ENCODE measurements at regions of chr20 and their contacts with region 1.

Region 1: DNA sequence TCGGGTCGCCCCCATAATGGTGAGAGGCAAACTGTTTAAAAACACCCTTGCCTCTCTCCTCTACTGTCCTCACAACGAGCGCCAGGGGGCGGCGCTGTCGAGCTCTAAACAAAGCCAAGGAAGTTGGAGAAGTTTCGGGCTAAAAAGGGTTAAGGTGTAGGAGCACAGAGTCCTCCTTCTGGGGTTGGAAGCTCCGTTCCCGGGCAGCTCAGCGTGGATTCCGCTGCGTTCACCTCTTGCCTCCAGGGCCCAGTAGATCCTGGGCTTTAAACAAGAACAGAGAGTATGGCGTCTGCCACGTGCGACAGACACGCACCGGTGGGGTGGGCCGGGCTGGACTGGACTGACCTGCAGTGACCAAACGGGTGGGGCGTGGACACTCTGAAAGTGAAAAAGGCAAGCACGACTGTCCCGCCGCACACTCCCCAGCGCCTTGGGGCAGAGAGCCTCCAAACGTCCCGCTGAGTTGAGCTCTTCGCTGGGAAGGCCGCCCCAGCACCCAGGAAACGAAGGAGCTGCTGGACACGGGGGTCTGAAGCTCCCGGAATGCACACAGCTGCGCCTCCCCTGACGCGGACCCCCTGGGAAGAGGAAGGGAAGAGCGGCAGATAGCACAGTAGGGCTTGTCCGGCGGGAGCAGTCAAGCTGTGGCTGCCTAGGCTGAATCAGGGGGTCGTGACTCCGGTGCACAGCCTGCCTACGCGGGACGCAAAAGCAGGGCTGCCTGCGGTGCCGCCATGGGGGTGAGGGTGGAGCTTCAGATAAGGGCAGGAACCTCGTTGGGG is 1.6 kb upstream of the THBD start:
- DNase-seq: no peak
- H3K4me3 ChIP-seq: peak overlapping the region; percentile 60
- CTCF ChIP-seq: peak; percentile 78

Region 2: DNA sequence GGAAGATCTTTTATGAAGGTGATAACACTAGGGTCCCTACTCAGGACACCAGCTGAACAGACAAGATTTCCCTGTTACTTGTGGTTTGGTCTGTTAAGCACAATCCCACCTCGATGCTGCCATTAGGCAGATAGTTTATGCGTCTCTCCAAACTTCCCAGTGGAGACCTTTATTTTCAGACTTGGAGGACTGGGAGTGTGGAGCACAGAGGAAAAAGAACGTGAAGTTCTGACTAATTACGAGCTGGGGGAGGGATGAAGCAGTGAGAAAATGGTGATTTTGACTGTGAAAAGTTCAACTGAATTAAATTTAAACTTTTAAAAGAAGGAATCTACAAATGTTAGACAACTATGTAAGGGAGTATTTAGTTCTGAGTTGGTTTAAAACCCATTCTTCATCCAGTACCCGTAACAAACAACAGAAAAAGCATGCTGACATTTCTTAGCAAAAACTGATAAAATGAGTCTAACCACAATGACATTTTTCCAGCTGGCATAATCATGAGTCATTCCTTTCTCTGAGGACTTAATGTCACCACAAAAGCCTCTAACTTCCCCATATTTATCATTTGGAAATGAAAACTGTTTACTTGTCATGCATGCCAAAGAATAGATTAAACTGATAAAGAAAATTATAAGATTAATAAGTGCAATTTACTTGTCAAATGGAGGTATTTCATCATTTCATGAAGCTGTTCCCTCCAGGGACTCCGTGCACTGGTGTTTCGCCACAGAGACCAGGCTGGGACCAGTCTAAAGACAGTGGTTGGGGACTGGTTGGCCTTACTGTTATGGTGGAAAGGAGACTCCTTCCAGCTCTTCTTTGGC is 129.2 kb before region 1 on chr20:
- CTCF ChIA-PET with region 1: no interaction called
- POLR2A ChIA-PET with region 1: no interaction called
- DNase-seq: peak; percentile 9
- H3K4me3 ChIP-seq: no peak overlapping the region
- CTCF ChIP-seq: no peak

Region 3: GRCh38 chr20:23061734-23062561 is 10.9 kb after region 1 on chr20:
- CTCF ChIA-PET with region 1: interaction called, 33 read pairs
- POLR2A ChIA-PET with region 1: no interaction called
- DNase-seq: peak; percentile 12
- H3K4me3 ChIP-seq: no peak overlapping the region
- CTCF ChIP-seq: peak; percentile 71

Region 4: GRCh38 chr20:23235173-23236027 is 184.4 kb after region 1 on chr20:
- CTCF ChIA-PET with region 1: interaction called, 21 read pairs
- POLR2A ChIA-PET with region 1: no interaction called
- DNase-seq: no peak
- H3K4me3 ChIP-seq: no peak overlapping the region
- CTCF ChIP-seq: peak; percentile 75

Region 5: GRCh38 chr20:23340524-23340923 is 289.5 kb after region 1 on chr20:
- CTCF ChIA-PET with region 1: interaction called, 50 read pairs
- POLR2A ChIA-PET with region 1: interaction called, 3 read pairs
- DNase-seq: peak; percentile 21
- H3K4me3 ChIP-seq: no peak overlapping the region
- CTCF ChIP-seq: peak; percentile 71

Measured in AG04449 (cell line).